ENCODE measurements at regions of chr9 and their contacts with region 1.

Region 1: GRCh38 chr9:8857926-8858595 is 1058.5 kb upstream of the DMAC1 start:
- DNase-seq: peak; percentile 21
- H3K4me3 ChIP-seq: peak overlapping the region; percentile 52 to 62 (median 59)
- H3K27ac ChIP-seq: no peak overlapping the region
- H3K4me1 ChIP-seq: peaks cover 4% of the 10 kb centered on the region
- H3K27me3 ChIP-seq: peaks cover 13 to 22% of the 10 kb centered on the region in 2 experiments
- CTCF ChIP-seq: no peak
- POLR2A ChIP-seq: no peak

Region 2: GRCh38 chr9:7799234-7799943 is 1058.7 kb before region 1 on chr9 and contains the start of gene DMAC1:
- CTCF ChIA-PET with region 1: no interaction called
- POLR2A ChIA-PET with region 1: no interaction called
- dilution Hi-C with region 1: no loop called
- intact Hi-C with region 1: loop called (anchors 10 kb)
- DNase-seq: peak; percentile 78
- H3K4me3 ChIP-seq: peak within 1 kb of the TSS; percentile 65 to 99 (median 84)
- H3K27ac ChIP-seq: peak within 1 kb of the TSS; percentile 60
- H3K4me1 ChIP-seq: peaks cover 6% of the 10 kb centered on the region
- H3K27me3 ChIP-seq: no peaks in the 10 kb centered on the region
- CTCF ChIP-seq: no peak
- POLR2A ChIP-seq: peak; percentile 20
- total RNA-seq, gene DMAC1: 44.0 and 49.6 TPM in 2 replicates

Region 3: GRCh38 chr9:8365029-8365428 is 493.0 kb before region 1 on chr9:
- CTCF ChIA-PET with region 1: no interaction called
- POLR2A ChIA-PET with region 1: no interaction called
- dilution Hi-C with region 1: no loop called
- intact Hi-C with region 1: loop called (anchors 5 kb)
- DNase-seq: peak; percentile 94
- H3K4me3 ChIP-seq: peak overlapping the region in 1 of 3 experiments; percentile 22
- H3K27ac ChIP-seq: peak overlapping the region; percentile 98
- H3K4me1 ChIP-seq: peaks cover 41% of the 10 kb centered on the region
- H3K27me3 ChIP-seq: no peaks in the 10 kb centered on the region
- CTCF ChIP-seq: no peak
- POLR2A ChIP-seq: no peak

Region 4: GRCh38 chr9:8486095-8486494 is 372.0 kb before region 1 on chr9:
- CTCF ChIA-PET with region 1: no interaction called
- POLR2A ChIA-PET with region 1: no interaction called
- dilution Hi-C with region 1: no loop called
- intact Hi-C with region 1: loop called (anchors 5 kb)
- DNase-seq: peak; percentile 8
- H3K4me3 ChIP-seq: no peak overlapping the region
- H3K27ac ChIP-seq: no peak overlapping the region
- H3K4me1 ChIP-seq: no peaks in the 10 kb centered on the region
- H3K27me3 ChIP-seq: no peaks in the 10 kb centered on the region
- CTCF ChIP-seq: peak; percentile 9 to 14
- POLR2A ChIP-seq: no peak